Left ventricle myocardium inferior (tissue), 1 donor: ENCODE measurements at regions of chr1 and their contacts with region 1.

Region 1: GRCh38 chr1:39822091-39822490 is 33.4 kb upstream of the BMP8B start:
- DNase-seq: no peak
- H3K4me3 ChIP-seq: no peak overlapping the region
- H3K27ac ChIP-seq: no peak overlapping the region
- H3K4me1 ChIP-seq: no peaks in the 10 kb centered on the region
- H3K27me3 ChIP-seq: peaks cover 79% of the 10 kb centered on the region
- CTCF ChIP-seq: no peak

Region 2: GRCh38 chr1:40032240-40032891 is 210.3 kb after region 1 on chr1:
- intact Hi-C with region 1: loop called (anchors 5 kb)
- DNase-seq: no peak
- H3K4me3 ChIP-seq: no peak overlapping the region
- H3K27ac ChIP-seq: no peak overlapping the region
- H3K4me1 ChIP-seq: peaks cover 30% of the 10 kb centered on the region
- H3K27me3 ChIP-seq: no peaks in the 10 kb centered on the region
- CTCF ChIP-seq: peak; percentile 76

Region 3: GRCh38 chr1:40668769-40669525 is 846.9 kb after region 1 on chr1:
- intact Hi-C with region 1: no loop called
- DNase-seq: peak; percentile 77
- H3K4me3 ChIP-seq: peak overlapping the region; percentile 36
- H3K27ac ChIP-seq: no peak overlapping the region
- H3K4me1 ChIP-seq: peaks cover 23% of the 10 kb centered on the region
- H3K27me3 ChIP-seq: peaks cover 4% of the 10 kb centered on the region
- CTCF ChIP-seq: peak; percentile 99